Endothelial cell of umbilical vein (primary cell): ENCODE measurements at regions of chr12 and their contacts with region 1.

Region 1: GRCh38 chr12:117212563-117213190 is 22.4 kb upstream of the FBXO21 start:
- DNase-seq: peak; percentile 70
- H3K4me3 ChIP-seq: no peak overlapping the region
- H3K27ac ChIP-seq: no peak overlapping the region
- H3K4me1 ChIP-seq: no peaks in the 10 kb centered on the region
- H3K27me3 ChIP-seq: peaks cover 0 to 2% of the 10 kb centered on the region in 2 experiments
- CTCF ChIP-seq: peak; percentile 82 to 86
- POLR2A ChIP-seq: no peak

Region 2: DNA sequence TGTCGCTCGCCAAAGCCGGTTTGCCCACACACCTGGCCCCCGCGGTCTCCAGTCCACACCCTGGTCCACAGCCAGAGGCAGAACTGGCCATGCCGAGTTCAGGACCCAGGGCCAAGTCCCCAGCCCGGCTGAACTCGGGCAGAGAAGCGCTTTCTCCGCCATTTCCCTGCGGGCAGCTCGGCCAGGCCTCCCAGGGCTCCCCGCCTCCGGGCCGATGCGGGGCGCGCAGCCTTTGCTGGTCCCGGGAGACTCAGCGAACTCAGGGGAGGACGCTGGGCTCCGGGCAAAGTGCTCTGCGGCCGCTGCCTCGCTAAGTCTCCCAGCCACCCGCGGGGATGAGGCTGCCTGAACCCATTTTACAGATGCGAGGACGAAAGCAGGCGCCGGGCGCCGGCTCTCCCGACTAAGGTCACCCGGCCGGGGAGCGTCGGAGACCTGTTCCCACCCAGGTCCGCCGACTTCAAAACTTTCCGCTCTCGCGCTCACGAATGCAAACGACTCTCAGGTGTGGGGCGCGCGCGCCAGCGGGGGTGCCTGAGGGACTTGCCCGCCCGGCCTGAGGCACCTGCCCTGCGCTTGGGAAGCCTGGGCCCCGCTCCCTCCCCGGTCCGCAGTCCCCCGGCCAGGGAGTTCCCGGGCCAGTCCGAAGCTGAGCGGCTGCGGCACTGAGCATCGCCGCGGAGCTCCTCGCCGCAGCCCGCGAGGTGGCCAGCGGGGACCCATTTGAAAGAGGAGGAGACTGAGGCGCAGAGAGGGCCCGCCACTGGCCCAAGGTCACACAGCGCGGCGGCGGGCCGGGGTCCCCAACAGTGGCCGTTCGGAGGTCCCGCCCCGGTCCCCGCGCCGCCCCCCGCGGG is 114.1 kb before region 1 on chr12:
- CTCF ChIA-PET with region 1: no interaction called
- POLR2A ChIA-PET with region 1: no interaction called
- dilution Hi-C with region 1: no loop called
- intact Hi-C with region 1: no loop called
- DNase-seq: no peak
- H3K4me3 ChIP-seq: peak overlapping the region in 1 of 3 experiments; percentile 27
- H3K27ac ChIP-seq: no peak overlapping the region
- H3K4me1 ChIP-seq: no peaks in the 10 kb centered on the region
- H3K27me3 ChIP-seq: peaks cover 39 to 49% of the 10 kb centered on the region in 2 experiments
- CTCF ChIP-seq: no peak
- POLR2A ChIP-seq: no peak

Region 3: DNA sequence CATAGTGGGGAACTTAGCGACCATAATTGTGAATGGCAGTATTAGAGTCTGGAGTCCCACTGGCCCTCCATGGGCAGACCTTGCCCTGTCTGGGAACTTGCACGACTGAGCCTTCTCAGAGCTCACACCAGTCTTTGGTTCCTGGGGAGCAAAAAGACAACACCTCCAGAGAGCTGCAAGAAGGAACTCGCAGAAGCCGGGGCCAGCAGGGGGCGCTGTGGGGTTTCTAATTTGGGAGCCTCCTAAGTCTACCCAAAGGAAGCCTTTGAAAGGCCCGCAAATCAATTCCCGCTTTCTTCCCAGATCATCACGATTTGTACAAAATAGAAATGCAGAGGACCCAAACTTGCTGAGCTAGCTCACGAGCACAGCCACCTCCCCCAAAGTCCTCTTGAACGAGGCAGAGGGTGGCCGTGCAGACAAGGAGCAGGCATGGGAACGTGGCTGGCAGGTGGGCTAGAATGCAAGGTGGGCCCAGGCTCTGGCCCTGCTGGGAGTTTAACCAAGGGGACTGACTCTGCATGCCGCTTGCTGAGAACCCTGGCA is 23.9 kb after region 1 on chr12:
- CTCF ChIA-PET with region 1: interaction called, 9 read pairs
- POLR2A ChIA-PET with region 1: no interaction called
- dilution Hi-C with region 1: no loop called
- intact Hi-C with region 1: loop called (anchors 1 kb)
- DNase-seq: peak; percentile 45
- H3K4me3 ChIP-seq: no peak overlapping the region
- H3K27ac ChIP-seq: no peak overlapping the region
- H3K4me1 ChIP-seq: no peaks in the 10 kb centered on the region
- H3K27me3 ChIP-seq: no peaks in the 10 kb centered on the region
- CTCF ChIP-seq: peak; percentile 78 to 91
- POLR2A ChIP-seq: no peak

Region 4: DNA sequence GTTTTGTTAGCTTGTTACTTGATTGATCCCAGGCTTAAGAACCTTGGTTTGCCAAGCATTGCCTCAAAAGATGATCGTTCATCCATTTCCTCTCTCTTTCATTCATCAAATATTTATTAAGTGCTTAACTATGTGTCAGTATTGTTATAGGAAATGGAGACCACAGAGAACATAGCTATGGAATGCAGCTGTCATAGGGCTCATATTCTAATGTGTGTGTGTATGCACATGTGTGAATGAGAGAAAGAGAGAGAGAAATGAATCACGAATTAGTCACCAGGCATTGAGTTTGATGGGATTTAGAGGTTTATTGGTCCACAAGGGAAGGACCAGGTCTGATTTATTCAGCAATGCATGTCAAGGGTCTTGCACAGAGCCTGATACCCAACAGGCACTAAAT is 48.6 kb after region 1 on chr12:
- CTCF ChIA-PET with region 1: no interaction called
- POLR2A ChIA-PET with region 1: no interaction called
- dilution Hi-C with region 1: no loop called
- intact Hi-C with region 1: loop called (anchors 1 kb)
- DNase-seq: no peak
- H3K4me3 ChIP-seq: no peak overlapping the region
- H3K27ac ChIP-seq: no peak overlapping the region
- H3K4me1 ChIP-seq: no peaks in the 10 kb centered on the region
- H3K27me3 ChIP-seq: no peaks in the 10 kb centered on the region
- CTCF ChIP-seq: no peak
- POLR2A ChIP-seq: no peak

Region 5: GRCh38 chr12:117850048-117850447 is 637.4 kb after region 1 on chr12:
- CTCF ChIA-PET with region 1: interaction called, 37 read pairs
- POLR2A ChIA-PET with region 1: no interaction called
- dilution Hi-C with region 1: no loop called
- intact Hi-C with region 1: loop called (anchors 1 kb)
- DNase-seq: peak; percentile 54
- H3K4me3 ChIP-seq: no peak overlapping the region
- H3K27ac ChIP-seq: no peak overlapping the region
- H3K4me1 ChIP-seq: no peaks in the 10 kb centered on the region
- H3K27me3 ChIP-seq: peaks cover 6% of the 10 kb centered on the region in 2 experiments
- CTCF ChIP-seq: peak; percentile 86 to 88
- POLR2A ChIP-seq: no peak